GM13976 (cell line): ENCODE measurements at regions of chr18 and their contacts with region 1.

Region 1: DNA sequence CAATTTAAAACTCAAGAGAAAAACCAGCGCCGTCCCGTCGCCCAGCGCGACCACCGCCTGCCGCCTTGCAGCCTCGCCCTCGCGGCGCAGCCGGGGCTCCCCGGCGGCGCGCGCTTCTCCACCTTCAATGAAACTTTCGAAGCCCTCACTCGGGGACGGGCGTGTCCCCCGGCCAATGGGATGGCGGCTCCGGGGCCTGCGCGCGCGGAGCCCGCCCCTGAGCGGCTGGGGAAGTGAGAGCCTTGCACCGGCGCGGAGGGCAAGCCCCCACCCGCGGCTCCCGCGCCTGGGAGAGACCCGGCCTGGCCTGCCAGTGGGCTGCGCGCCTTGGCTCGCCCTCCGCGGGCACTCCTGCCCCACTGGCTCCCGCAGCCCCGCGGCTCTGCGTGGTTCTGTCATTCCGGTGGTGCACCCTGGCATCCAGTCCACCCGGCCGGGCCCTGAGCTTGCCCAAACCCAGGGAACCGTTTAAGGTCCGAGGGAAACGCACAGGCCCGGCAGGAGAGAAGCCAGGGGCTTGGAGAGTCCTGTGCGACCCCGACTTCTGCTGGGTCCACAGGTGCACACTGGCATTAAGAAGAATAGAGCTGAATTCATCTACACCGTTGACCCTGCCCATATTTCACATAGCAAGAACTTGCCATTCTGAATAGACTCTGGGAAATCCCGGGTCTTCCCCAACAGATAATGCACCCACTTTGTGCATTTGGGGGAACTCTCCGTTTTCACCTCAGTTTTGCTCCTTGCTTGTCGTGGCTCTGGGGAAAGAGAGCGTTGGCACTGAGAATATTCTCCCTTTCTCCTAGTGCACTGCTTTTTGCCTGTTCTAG is at the start of gene PIEZO2:
- DNase-seq: peak; percentile 96
- CTCF ChIP-seq: no peak

Region 2: GRCh38 chr18:10560450-10561045 is 589.1 kb before region 1 on chr18:
- in situ Hi-C with region 1: loop called (anchors 25 kb)
- DNase-seq: peak; percentile 79
- CTCF ChIP-seq: peak; percentile 59

Region 3: GRCh38 chr18:10851824-10852319 is 297.8 kb before region 1 on chr18:
- in situ Hi-C with region 1: loop called (anchors 10 kb)
- DNase-seq: peak; percentile 58
- CTCF ChIP-seq: peak; percentile 48

Region 4: DNA sequence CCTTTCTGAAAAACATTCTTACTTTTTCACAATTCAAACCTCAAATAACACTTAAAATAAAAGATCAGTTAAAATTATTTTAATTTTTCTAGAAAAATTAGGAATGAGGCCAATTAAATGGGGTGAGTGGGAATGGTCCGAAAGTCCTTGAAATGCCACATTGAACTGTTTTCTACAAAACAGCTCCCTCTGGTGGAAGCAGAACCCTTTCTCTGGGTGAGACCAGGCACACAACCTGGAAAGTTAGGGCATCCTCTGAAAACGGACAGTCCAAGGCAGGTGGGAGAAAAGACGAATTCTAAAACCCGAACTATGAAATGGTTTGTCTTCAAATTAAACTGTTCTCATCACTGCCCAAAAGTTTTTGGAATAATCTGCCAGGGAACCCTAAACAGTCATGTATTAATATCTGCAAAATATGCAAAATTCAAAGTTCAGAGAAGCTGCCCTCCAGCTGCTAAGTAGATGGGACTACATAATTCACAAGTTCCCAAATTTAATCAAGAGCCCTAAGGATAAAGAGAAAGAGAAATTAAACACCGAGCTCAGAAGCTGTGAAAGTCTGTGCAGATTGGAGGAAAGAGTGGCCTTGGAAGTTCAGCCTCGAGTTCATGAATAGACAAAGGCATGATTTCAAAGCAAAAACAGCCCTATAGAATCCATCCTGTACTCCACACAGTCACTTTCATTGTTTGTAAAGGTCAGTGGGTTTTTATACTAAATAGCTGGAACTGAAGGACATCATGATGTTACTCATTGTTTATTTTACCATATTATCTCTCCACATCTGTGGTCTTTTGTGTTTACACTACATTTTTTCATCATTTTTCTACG is 108.6 kb before region 1 on chr18:
- in situ Hi-C with region 1: loop called (anchors 25 kb)
- DNase-seq: peak; percentile 50
- CTCF ChIP-seq: peak; percentile 67